IMR-90 (cell line): ENCODE measurements at regions of chr4 and their contacts with region 1.

Region 1: GRCh38 chr4:91280551-91281290 is 1023.0 kb upstream of the GRID2 start:
- DNase-seq: no peak
- ATAC-seq: no peak
- H3K4me3 ChIP-seq: no peak overlapping the region
- H3K27ac ChIP-seq: no peak overlapping the region
- H3K4me1 ChIP-seq: no peaks in the 10 kb centered on the region
- H3K27me3 ChIP-seq: no peaks in the 10 kb centered on the region
- CTCF ChIP-seq: no peak
- POLR2A ChIP-seq: no peak
- RAD21 ChIP-seq: no peak

Region 2: DNA sequence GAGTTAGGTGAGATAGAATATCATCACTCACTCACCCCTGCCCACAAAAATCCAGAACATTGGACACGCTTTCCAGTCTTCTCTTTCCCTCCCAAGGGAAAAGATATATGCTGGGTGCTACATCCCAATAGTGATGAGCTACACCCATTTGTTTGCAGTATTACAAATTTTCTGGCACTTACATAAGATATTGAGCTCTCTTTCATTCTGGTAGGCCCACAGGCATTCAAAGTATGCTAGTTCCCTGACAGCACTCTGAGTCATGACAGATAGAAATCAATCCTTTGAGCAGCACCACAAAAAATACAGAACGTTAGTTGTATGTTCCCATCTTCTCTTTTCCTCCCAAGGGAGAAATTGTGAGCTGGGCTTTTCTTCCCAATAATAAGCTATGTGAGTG is 545.5 kb after region 1 on chr4:
- CTCF ChIA-PET with region 1: no interaction called
- POLR2A ChIA-PET with region 1: interaction called, 15 read pairs
- dilution Hi-C with region 1: no loop called
- in situ Hi-C with region 1: no loop called
- intact Hi-C with region 1: no loop called
- DNase-seq: no peak
- ATAC-seq: no peak
- H3K4me3 ChIP-seq: no peak overlapping the region
- H3K27ac ChIP-seq: no peak overlapping the region
- H3K4me1 ChIP-seq: no peaks in the 10 kb centered on the region
- H3K27me3 ChIP-seq: no peaks in the 10 kb centered on the region
- CTCF ChIP-seq: no peak
- POLR2A ChIP-seq: no peak
- RAD21 ChIP-seq: no peak